ENCODE measurements at regions of chr3 and their contacts with region 1.

Region 1: GRCh38 chr3:71652781-71653413 is 69.4 kb upstream of the FOXP1 start:
- DNase-seq: peak; percentile 65 to 78 (median 66)
- ATAC-seq: peak; percentile 96 to 99 (median 98)
- H3K4me3 ChIP-seq: no peak overlapping the region
- H3K27ac ChIP-seq: no peak overlapping the region
- H3K4me1 ChIP-seq: no peaks in the 10 kb centered on the region
- H3K27me3 ChIP-seq: no peaks in the 10 kb centered on the region
- CTCF ChIP-seq: peak; percentile 45 to 65 (median 62)
- POLR2A ChIP-seq: no peak

Region 2: GRCh38 chr3:70531063-70531657 is 1121.7 kb before region 1 on chr3:
- intact Hi-C with region 1: loop called in 1 of 2 experiments (anchors 10 kb)
- DNase-seq: no peak
- ATAC-seq: peak in 1 of 4 donors; percentile 42
- H3K4me3 ChIP-seq: no peak overlapping the region
- H3K27ac ChIP-seq: no peak overlapping the region
- H3K4me1 ChIP-seq: no peaks in the 10 kb centered on the region
- H3K27me3 ChIP-seq: no peaks in the 10 kb centered on the region
- CTCF ChIP-seq: peak; percentile 44 to 55 (median 51)
- POLR2A ChIP-seq: no peak

Region 3: GRCh38 chr3:71771126-71771525 is 118.2 kb after region 1 on chr3:
- intact Hi-C with region 1: no loop called
- DNase-seq: no peak
- ATAC-seq: no peak
- H3K4me3 ChIP-seq: no peak overlapping the region
- H3K27ac ChIP-seq: no peak overlapping the region
- H3K4me1 ChIP-seq: no peaks in the 10 kb centered on the region
- H3K27me3 ChIP-seq: peaks cover 0 to 4% of the 10 kb centered on the region in 2 donors
- CTCF ChIP-seq: no peak
- POLR2A ChIP-seq: no peak